A549 (cell line): ENCODE measurements at regions of chr19 and their contacts with region 1.

Region 1: GRCh38 chr19:47296036-47296435 is 13.6 kb upstream of the C5AR1 start:
- DNase-seq: peak; percentile 88
- ATAC-seq: peak; percentile 95 to 99
- H3K4me3 ChIP-seq: no peak overlapping the region
- H3K27ac ChIP-seq: peak overlapping the region; percentile 44 to 59; a peak in 4 of 6 replicates
- H3K4me1 ChIP-seq: peaks cover 5% of the 10 kb centered on the region; the same call in 1 of the 3 replicates
- CTCF ChIP-seq: peak; percentile 98
- EP300 ChIP-seq: no peak
- POLR2A ChIP-seq: no peak
- RAD21 ChIP-seq: peak; percentile 97 to 99

Region 2: GRCh38 chr19:47095476-47096099 is 200.4 kb before region 1 on chr19:
- CTCF ChIA-PET with region 1: no interaction called
- POLR2A ChIA-PET with region 1: no interaction called
- DNase-seq: no peak
- ATAC-seq: no peak
- H3K4me3 ChIP-seq: no peak overlapping the region
- H3K27ac ChIP-seq: peak overlapping the region; percentile 43 to 68
- H3K4me1 ChIP-seq: peaks cover 26% of the 10 kb centered on the region
- CTCF ChIP-seq: no peak
- EP300 ChIP-seq: no peak
- POLR2A ChIP-seq: no peak
- RAD21 ChIP-seq: no peak

Region 3: GRCh38 chr19:47195434-47195833 is 100.6 kb before region 1 on chr19:
- CTCF ChIA-PET with region 1: no interaction called
- POLR2A ChIA-PET with region 1: no interaction called
- DNase-seq: no peak
- ATAC-seq: no peak
- H3K4me3 ChIP-seq: no peak overlapping the region
- H3K27ac ChIP-seq: no peak overlapping the region
- H3K4me1 ChIP-seq: peaks cover 11% of the 10 kb centered on the region
- CTCF ChIP-seq: no peak
- EP300 ChIP-seq: no peak
- POLR2A ChIP-seq: no peak
- RAD21 ChIP-seq: no peak

Region 4: GRCh38 chr19:47236072-47236675 is 59.9 kb before region 1 on chr19:
- CTCF ChIA-PET with region 1: no interaction called
- POLR2A ChIA-PET with region 1: no interaction called
- DNase-seq: no peak
- ATAC-seq: no peak
- H3K4me3 ChIP-seq: no peak overlapping the region
- H3K27ac ChIP-seq: no peak overlapping the region
- H3K4me1 ChIP-seq: peaks cover 27% of the 10 kb centered on the region
- CTCF ChIP-seq: no peak
- EP300 ChIP-seq: no peak
- POLR2A ChIP-seq: no peak
- RAD21 ChIP-seq: no peak

Region 5: GRCh38 chr19:47273313-47273977 is 22.6 kb before region 1 on chr19:
- CTCF ChIA-PET with region 1: interaction called, 160 read pairs
- POLR2A ChIA-PET with region 1: no interaction called
- DNase-seq: peak; percentile 96
- ATAC-seq: peak; percentile 66 to 89
- H3K4me3 ChIP-seq: peak overlapping the region; percentile 59
- H3K27ac ChIP-seq: peak overlapping the region; percentile 80 to 90
- H3K4me1 ChIP-seq: peaks cover 15% of the 10 kb centered on the region
- CTCF ChIP-seq: no peak
- EP300 ChIP-seq: no peak
- POLR2A ChIP-seq: peak; percentile 41
- RAD21 ChIP-seq: no peak

Region 6: DNA sequence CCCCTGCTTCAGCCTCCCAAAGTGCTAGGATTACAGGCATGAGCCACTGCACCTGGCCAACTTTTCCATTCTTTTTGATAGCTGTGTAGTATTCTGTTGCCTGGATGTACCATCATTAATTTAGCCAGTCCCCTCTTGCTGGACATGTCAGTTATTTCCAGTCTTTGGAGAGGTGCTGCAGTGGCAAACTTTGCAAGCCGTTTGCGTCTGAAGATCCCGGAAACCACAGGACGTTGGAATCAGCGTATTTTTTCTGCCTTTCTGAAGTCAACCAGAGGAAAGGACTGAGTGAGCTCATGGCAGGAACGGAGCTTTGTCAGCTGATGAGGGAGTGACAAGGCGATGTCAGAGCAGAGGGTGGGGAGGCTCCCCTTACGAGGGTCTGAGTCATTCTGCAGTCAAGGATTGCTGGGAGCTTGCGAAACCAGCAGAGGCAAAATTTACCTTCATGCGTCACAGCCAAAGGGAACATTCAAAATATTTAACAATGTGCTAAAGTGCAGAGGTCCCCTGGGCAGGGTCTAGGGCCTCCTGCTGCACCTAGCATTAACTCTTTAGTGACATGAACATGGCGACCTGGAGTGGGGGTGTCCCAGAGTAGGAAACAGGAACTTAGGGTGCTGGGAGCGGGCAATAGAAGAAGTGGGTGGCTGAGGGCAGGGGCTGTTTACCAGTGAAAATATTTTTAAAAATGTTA is 19.2 kb after region 1 on chr19:
- CTCF ChIA-PET with region 1: interaction called, 31 read pairs
- POLR2A ChIA-PET with region 1: no interaction called
- DNase-seq: peak; percentile 98 to 99
- ATAC-seq: peak; percentile 94 to 96
- H3K4me3 ChIP-seq: no peak overlapping the region
- H3K27ac ChIP-seq: peak overlapping the region; percentile 74 to 85
- H3K4me1 ChIP-seq: peaks cover 31% of the 10 kb centered on the region
- CTCF ChIP-seq: no peak
- EP300 ChIP-seq: peak; percentile 91 to 96; a peak in 3 of 5 replicates
- POLR2A ChIP-seq: no peak
- RAD21 ChIP-seq: peak; percentile 4 to 53

Region 7: DNA sequence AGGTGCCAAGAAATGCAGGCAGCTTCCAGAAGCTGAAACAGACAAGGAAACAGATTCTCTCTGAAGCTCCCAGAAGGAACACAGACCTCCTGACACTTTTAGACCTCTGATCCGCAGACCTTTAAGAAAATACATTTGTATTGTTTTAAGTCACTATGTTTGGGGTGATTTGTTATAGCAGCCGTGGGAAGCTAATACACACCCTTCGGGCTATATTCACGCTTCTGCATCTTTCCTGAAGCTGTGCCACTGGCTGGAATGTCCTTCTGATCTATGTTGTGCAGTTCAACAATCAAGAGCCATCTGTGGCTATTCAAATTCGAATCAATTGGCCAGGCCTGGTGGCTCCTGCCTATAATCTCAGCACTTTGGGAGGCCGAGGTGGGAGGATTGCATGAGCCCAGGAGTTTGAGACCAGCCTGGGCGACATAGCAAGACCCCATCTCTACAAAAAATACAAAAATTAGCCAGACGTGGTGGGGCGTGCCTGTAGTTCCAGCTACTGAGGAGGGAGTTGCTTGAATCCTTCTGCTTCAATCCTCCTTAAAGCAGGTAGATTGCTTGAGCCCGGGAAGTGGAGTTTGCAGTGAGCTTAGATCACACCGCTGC is 47.3 kb after region 1 on chr19:
- CTCF ChIA-PET with region 1: interaction called, 117 read pairs
- POLR2A ChIA-PET with region 1: no interaction called
- DNase-seq: no peak
- ATAC-seq: no peak
- H3K4me3 ChIP-seq: no peak overlapping the region
- H3K27ac ChIP-seq: no peak overlapping the region
- H3K4me1 ChIP-seq: no peaks in the 10 kb centered on the region
- CTCF ChIP-seq: no peak
- EP300 ChIP-seq: no peak
- POLR2A ChIP-seq: no peak
- RAD21 ChIP-seq: no peak

Region 8: GRCh38 chr19:47414469-47414868 is 118.4 kb after region 1 on chr19:
- CTCF ChIA-PET with region 1: interaction called, 54 read pairs
- POLR2A ChIA-PET with region 1: no interaction called
- DNase-seq: peak in 1 of 2 experiments; percentile 82
- ATAC-seq: peak; percentile 68 to 81; a peak in 5 of 6 replicates
- H3K4me3 ChIP-seq: no peak overlapping the region
- H3K27ac ChIP-seq: no peak overlapping the region
- H3K4me1 ChIP-seq: peaks cover 17% of the 10 kb centered on the region
- CTCF ChIP-seq: peak; percentile 52
- EP300 ChIP-seq: no peak
- POLR2A ChIP-seq: no peak
- RAD21 ChIP-seq: peak; percentile 67 to 78

Region 9: DNA sequence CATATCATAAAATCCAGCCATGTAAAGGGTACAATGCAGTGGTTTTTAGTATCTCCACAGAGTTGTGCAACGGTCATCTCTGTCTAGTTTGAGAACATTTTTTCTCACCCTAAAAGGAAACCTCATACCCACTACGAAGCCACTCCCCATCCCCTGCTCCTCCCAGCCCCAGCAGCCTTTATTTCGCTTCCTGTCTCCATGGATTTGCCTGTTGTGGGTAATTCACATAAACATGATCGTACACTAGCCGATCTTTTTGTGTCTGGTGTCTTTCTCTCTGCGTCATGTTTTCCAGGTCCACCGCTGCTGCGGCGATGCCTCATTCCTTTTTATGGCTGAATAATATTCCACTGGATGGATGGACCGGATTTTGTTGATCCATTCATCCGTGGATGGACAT is 341.5 kb after region 1 on chr19:
- CTCF ChIA-PET with region 1: no interaction called
- POLR2A ChIA-PET with region 1: no interaction called
- DNase-seq: no peak
- ATAC-seq: no peak
- H3K4me3 ChIP-seq: no peak overlapping the region
- H3K27ac ChIP-seq: no peak overlapping the region
- H3K4me1 ChIP-seq: peaks cover 7% of the 10 kb centered on the region; the same call in 1 of the 3 replicates
- CTCF ChIP-seq: no peak
- EP300 ChIP-seq: no peak
- POLR2A ChIP-seq: no peak
- RAD21 ChIP-seq: no peak